ENCODE measurements at regions of chr1 and their contacts with region 1.

Region 1: DNA sequence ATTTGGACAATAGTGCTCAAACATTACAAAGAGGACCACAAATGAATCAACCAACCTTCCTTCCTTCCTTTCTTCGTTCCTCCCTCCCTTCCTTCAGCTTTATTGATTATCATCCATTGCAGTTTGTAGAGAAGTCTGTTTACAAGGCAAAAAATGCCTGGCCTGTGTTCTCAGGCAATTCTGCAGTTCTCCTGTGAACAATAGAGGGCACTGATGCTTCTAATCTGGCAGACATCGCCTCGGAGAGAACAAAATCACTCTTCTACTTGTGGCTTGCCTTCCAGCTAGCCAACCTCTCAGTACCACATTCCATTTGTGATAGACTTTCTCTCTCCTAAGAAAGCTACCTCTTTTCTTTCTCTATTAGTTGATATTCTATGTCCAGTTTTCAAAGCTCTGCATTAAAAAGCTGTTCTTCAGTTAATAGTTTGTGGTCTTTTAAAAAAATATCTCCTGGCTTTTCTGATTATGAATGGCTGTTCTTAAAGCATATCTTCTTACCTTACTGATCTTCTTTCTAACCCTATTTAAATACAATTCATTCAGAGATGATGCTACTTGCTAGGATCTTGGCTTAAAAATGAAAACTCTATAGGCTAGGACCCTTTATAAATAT is 26.9 kb upstream of the ESRRG start:
- H3K4me3 ChIP-seq: no peak overlapping the region
- H3K27ac ChIP-seq: no peak overlapping the region
- H3K4me1 ChIP-seq: no peaks in the 10 kb centered on the region
- CTCF ChIP-seq: no peak

Region 2: DNA sequence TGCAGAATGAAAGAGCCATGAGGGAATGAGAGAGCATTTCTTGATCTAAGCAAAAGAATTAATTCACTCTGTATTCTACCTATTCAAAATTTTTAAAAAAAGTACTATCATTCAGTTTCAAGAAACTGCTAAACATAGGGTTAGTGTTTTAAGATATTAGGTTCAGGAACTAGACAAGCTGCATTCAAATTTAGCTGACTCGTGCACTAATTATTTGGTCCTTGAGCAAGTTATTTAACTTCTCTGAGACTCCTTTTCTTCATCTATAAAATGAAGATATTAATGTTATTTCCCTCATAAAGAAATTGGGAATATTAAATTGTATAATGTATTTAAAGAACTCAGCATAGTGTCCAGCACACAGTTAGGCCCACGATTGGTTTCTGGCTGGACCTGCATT is 251.8 kb before region 1 on chr1:
- CTCF ChIA-PET with region 1: no interaction called
- POLR2A ChIA-PET with region 1: no interaction called
- H3K4me3 ChIP-seq: no peak overlapping the region
- H3K27ac ChIP-seq: no peak overlapping the region
- H3K4me1 ChIP-seq: no peaks in the 10 kb centered on the region
- CTCF ChIP-seq: no peak

Region 3: DNA sequence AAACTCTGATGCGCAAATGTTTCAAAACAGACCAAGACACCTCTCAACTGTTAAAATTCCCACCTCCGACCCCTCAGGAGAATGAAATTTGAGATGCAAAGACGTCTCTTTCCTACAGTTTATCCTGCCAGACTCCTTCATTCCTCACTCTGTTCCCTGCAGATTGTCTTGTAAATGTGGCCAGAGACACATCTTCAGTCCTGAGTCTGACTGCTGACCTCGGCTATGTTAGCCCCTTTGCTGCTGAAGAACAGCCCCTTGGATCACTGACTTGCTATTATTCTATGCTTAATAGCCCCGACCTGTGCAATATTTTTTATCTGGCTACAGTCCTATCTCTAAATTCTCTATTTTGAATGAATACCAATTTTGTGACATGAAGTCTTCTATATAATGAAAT is 10.3 kb before region 1 on chr1:
- CTCF ChIA-PET with region 1: interaction called, 11 read pairs
- POLR2A ChIA-PET with region 1: no interaction called
- H3K4me3 ChIP-seq: no peak overlapping the region
- H3K27ac ChIP-seq: no peak overlapping the region
- H3K4me1 ChIP-seq: no peaks in the 10 kb centered on the region
- CTCF ChIP-seq: no peak

Measured in HEK293 (cell line).